ENCODE measurements at regions of chrX and their contacts with region 1.

Region 1: DNA sequence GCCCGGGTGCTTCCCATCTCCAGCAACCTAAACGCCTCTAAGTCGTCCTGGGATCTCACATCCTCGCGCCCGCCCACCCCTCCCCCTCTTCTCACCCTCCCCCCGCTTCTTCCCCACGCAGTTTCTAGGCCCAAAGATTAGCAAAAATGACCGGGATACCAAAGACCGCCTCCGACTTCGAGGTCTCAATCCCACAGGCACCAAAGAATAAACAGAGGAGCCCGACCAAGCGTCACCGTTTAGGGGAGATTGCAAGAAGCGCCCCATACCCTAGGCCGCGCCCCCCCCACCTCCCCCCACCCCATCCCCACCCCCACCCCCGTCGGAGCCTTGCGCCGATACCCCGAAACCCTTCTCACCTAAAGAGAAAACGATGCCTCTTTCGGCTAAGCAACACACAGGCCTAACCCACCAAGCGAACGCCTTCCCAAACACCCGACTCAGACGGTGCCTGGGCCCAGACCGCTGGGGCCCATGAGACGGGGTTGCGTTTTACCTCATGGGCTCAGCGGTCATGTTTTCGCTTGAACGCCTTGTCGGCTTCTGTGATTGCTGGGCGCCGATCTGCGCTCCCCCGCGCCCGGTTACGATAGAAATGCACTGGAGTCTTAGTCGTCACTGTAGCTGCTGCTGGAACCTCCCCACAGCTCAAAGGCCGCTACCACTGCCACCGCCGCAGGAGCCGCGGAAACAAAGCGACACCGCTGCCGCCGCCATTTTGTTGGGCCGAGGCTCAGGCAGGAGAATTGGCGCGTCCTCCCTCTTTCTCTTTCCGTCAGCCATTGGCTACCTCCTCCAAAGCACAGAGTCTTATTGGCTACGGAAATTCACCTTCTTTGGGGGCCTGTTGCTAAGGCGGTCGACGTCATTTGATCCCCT is at the start of gene ATRX:
- DNase-seq: peak; percentile 80
- H3K4me3 Mint-ChIP-seq: peak within 1 kb of the TSS; percentile 99
- H3K27ac Mint-ChIP-seq: peak within 1 kb of the TSS; percentile 100
- H3K4me1 Mint-ChIP-seq: peaks cover 17% of the 10 kb centered on the region
- H3K27me3 Mint-ChIP-seq: no peaks in the 10 kb centered on the region
- total RNA-seq, gene ATRX: 49.2 to 49.9 TPM

Region 2: GRCh38 chrX:77446029-77446585 is 339.6 kb before region 1 on chrX:
- CTCF ChIA-PET with region 1: no interaction called
- intact Hi-C with region 1: loop called (anchors 10 kb)
- DNase-seq: peak; percentile 48
- H3K4me3 Mint-ChIP-seq: peak overlapping the region; percentile 72
- H3K27ac Mint-ChIP-seq: no peak overlapping the region
- H3K4me1 Mint-ChIP-seq: peaks cover 3% of the 10 kb centered on the region
- H3K27me3 Mint-ChIP-seq: peaks cover 14% of the 10 kb centered on the region

Region 3: GRCh38 chrX:78066110-78066509 is 280.4 kb after region 1 on chrX:
- CTCF ChIA-PET with region 1: no interaction called
- intact Hi-C with region 1: loop called (anchors 5 kb)
- DNase-seq: no peak
- H3K4me3 Mint-ChIP-seq: no peak overlapping the region
- H3K27ac Mint-ChIP-seq: no peak overlapping the region
- H3K4me1 Mint-ChIP-seq: peaks cover 14% of the 10 kb centered on the region
- H3K27me3 Mint-ChIP-seq: no peaks in the 10 kb centered on the region

Region 4: GRCh38 chrX:78321809-78322208 is 536.1 kb after region 1 on chrX:
- CTCF ChIA-PET with region 1: no interaction called
- intact Hi-C with region 1: loop called (anchors 10 kb)
- DNase-seq: peak; percentile 63
- H3K4me3 Mint-ChIP-seq: peak overlapping the region; percentile 32
- H3K27ac Mint-ChIP-seq: peak overlapping the region; percentile 85
- H3K4me1 Mint-ChIP-seq: peaks cover 36% of the 10 kb centered on the region
- H3K27me3 Mint-ChIP-seq: no peaks in the 10 kb centered on the region

Measured in activated naive CD4-positive, alpha-beta T cell treated with anti-CD3 and anti-CD28 coated beads for 36 hours (primary cell).